Activated CD8-positive, alpha-beta T cell treated with anti-CD3 and anti-CD28 coated beads for 36 hours (primary cell): ENCODE measurements at regions of chr11 and their contacts with region 1.

Region 1: GRCh38 chr11:66883016-66883968 is 26.4 kb downstream of the LRFN4 start:
- DNase-seq: peak; percentile 81
- ATAC-seq: peak; percentile 79
- H3K4me3 Mint-ChIP-seq: no peak overlapping the region
- H3K27ac Mint-ChIP-seq: no peak overlapping the region
- H3K4me1 Mint-ChIP-seq: peaks cover 11% of the 10 kb centered on the region
- H3K27me3 Mint-ChIP-seq: no peaks in the 10 kb centered on the region
- CTCF ChIP-seq: peak; percentile 83

Region 2: DNA sequence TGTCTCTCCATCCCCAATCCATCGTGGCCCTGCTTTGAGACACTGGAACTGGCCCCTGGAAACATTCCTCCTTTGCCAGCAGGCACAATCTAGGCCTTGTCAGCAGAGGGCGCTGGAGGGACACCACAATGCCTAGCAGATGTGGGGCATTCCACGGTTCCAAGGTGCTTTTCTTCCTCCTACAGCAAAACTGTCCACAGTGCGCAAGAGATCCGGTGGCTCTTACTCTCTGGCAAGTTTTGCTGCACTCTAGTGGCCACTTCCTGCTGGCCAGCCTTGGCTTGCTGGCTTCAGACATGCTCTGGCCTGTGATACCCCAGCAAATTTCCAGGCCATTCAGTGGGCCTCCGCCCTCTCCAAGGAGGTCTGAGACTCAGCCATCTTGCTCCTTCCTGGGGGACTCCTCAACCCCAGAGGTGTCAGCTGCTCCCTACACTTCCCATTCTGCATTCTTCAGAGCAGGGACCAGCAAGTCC is 188.5 kb before region 1 on chr11:
- CTCF ChIA-PET with region 1: interaction called, 13 read pairs
- POLR2A ChIA-PET with region 1: no interaction called
- intact Hi-C with region 1: no loop called
- DNase-seq: peak; percentile 91
- ATAC-seq: peak; percentile 97
- H3K4me3 Mint-ChIP-seq: no peak overlapping the region
- H3K27ac Mint-ChIP-seq: no peak overlapping the region
- H3K4me1 Mint-ChIP-seq: no peaks in the 10 kb centered on the region
- H3K27me3 Mint-ChIP-seq: no peaks in the 10 kb centered on the region
- CTCF ChIP-seq: peak; percentile 97